PC-9 (cell line): ENCODE measurements at regions of chr9 and their contacts with region 1.

Region 1: GRCh38 chr9:87497604-87498045 is at the start of gene DAPK1:
- DNase-seq: peak; percentile 52 to 81
- H3K4me3 ChIP-seq: peak within 1 kb of the TSS; percentile 70
- H3K27ac ChIP-seq: peak within 1 kb of the TSS; percentile 45
- H3K4me1 ChIP-seq: peaks cover 61% of the 10 kb centered on the region
- H3K27me3 ChIP-seq: no peaks in the 10 kb centered on the region
- CTCF ChIP-seq: peak; percentile 33; the same call in 1 of the 2 replicates
- total RNA-seq, gene DAPK1: 100 and 158 TPM in 2 replicates

Region 2: DNA sequence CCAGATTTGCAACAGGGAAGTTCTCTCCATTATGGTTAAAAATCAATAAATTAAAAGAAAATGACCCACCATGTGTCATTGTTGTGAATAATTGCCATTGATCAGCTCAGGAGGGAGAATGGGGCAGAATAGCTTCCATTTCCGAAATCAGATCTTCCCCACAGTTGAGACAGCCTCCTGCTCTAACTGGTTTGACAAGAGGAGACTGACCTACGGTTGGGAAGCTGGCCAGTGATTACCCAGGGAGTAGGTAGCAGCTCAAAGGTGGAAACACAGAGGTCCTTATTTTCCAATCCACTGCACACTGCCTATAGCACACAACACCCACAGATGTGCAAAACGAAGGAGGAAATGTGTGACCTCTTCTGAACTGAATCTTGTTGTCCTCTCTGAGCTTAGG is 69.0 kb before region 1 on chr9:
- CTCF ChIA-PET with region 1: interaction called, 5 read pairs
- POLR2A ChIA-PET with region 1: interaction called, 25 read pairs
- intact Hi-C with region 1: loop called (anchors 1 kb)
- DNase-seq: peak; percentile 71 to 93
- H3K4me3 ChIP-seq: peak overlapping the region; percentile 41; the same call in 1 of the 2 replicates
- H3K27ac ChIP-seq: peak overlapping the region; percentile 88
- H3K4me1 ChIP-seq: peaks cover 31% of the 10 kb centered on the region
- H3K27me3 ChIP-seq: no peaks in the 10 kb centered on the region
- CTCF ChIP-seq: no peak

Region 3: GRCh38 chr9:87469793-87470465 is 27.7 kb before region 1 on chr9:
- CTCF ChIA-PET with region 1: interaction called, 15 read pairs
- POLR2A ChIA-PET with region 1: interaction called, 3 read pairs
- intact Hi-C with region 1: no loop called
- DNase-seq: no peak
- H3K4me3 ChIP-seq: no peak overlapping the region
- H3K27ac ChIP-seq: no peak overlapping the region
- H3K4me1 ChIP-seq: peaks cover 3% of the 10 kb centered on the region; the same call in 1 of the 2 replicates
- H3K27me3 ChIP-seq: no peaks in the 10 kb centered on the region
- CTCF ChIP-seq: no peak

Region 4: DNA sequence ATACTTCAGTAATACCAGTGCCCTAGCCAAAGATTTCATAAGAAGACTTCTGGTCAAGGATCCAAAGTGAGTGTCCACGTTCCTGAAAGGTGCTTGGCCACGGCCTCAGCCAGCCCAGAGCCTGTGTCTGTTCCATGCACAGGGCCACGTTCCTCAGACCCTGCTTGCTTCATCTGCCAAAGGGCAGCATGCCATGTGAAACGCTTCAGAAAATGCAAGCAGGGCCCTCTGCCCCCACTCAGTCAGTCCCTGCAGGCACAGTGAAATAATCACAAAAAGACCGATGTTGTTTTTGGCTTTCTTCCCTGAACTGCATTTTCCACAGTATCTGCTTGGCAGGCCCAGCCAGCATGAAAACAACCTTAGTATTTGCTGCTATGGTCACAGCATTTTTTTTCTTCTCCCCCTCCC is 142.8 kb after region 1 on chr9:
- CTCF ChIA-PET with region 1: no interaction called
- POLR2A ChIA-PET with region 1: no interaction called
- intact Hi-C with region 1: loop called (anchors 5 kb)
- DNase-seq: peak in 1 of 2 experiments; percentile 32
- H3K4me3 ChIP-seq: no peak overlapping the region
- H3K27ac ChIP-seq: no peak overlapping the region
- H3K4me1 ChIP-seq: no peaks in the 10 kb centered on the region
- H3K27me3 ChIP-seq: no peaks in the 10 kb centered on the region
- CTCF ChIP-seq: no peak